Left cardiac atrium (tissue), 4 donors: ENCODE measurements at regions of chr19 and their contacts with region 1.

Region 1: GRCh38 chr19:10946964-10947657 is 13.7 kb upstream of the SMARCA4 start:
- DNase-seq: no peak
- ATAC-seq: peak; percentile 25 to 32

Region 2: DNA sequence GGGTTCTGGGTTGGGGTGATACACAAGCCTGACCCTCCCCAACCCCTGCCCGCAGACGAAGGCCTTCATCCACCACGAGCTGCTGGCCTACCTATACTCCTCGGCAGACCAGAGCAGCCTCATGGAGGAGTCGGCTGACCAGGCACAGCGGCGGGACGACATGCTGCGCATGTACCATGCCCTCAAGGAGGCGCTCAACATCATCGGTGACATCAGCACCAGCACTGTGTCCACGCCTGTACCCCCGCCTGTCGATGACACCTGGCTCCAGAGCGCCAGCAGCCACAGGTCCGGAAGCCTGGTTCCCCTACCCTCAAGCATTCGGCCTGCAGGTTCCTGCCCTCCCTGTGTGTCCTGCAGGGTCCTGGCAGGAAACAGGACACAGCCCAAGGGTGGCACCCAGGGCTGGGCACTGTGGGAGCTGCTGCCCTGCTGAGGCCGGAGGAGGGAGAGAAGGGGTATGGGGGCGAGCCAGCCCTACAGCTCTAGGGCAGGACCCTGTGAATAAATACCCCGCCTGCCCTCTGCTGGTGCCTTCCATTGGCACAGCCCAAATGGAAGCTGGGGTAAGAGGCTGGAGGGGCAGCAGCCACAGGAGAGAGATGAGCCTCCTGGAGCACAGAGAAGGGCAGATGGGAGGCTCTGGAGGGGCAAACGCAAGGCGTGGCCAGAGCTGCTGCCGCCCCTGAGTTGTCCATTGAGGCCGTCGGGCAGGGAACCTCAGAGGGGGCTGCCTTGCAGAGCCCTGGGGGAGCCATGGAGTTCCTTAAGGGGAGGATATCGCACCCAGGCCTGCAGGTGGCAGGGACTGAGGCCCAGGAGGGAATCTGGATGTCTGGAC is 117.9 kb before region 1 on chr19:
- intact Hi-C with region 1: no loop called
- DNase-seq: no peak
- ATAC-seq: no peak

Region 3: DNA sequence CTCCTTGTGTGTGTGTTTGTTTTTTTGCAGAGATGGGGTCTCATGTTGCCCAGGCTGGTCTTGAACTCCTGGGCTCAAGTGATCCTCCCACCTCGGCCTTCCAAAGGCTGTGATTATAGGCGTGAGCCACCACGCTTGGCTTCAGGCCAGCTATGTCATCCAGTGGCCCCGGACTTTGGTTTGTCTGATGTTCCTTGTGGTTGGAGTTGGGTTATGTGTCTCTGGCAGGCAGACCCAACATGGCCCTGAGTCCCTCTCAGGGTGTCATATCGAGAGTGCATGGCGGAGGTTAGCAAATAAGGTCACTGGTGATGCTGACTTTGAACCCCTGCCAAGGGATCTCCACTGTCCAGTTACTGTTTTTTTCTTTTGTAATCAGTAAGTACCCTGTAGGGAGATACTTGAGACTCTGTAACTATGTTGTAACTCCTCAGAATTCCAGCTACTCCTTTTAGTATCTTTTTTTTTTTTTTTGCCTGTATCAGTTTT is 51.0 kb after region 1 on chr19:
- intact Hi-C with region 1: loop called in 1 of 2 experiments (anchors 10 kb)
- DNase-seq: peak; percentile 37
- ATAC-seq: peak; percentile 26 to 41